Transverse colon (tissue), 4 donors: ENCODE measurements at regions of chr1 and their contacts with region 1.

Region 1: DNA sequence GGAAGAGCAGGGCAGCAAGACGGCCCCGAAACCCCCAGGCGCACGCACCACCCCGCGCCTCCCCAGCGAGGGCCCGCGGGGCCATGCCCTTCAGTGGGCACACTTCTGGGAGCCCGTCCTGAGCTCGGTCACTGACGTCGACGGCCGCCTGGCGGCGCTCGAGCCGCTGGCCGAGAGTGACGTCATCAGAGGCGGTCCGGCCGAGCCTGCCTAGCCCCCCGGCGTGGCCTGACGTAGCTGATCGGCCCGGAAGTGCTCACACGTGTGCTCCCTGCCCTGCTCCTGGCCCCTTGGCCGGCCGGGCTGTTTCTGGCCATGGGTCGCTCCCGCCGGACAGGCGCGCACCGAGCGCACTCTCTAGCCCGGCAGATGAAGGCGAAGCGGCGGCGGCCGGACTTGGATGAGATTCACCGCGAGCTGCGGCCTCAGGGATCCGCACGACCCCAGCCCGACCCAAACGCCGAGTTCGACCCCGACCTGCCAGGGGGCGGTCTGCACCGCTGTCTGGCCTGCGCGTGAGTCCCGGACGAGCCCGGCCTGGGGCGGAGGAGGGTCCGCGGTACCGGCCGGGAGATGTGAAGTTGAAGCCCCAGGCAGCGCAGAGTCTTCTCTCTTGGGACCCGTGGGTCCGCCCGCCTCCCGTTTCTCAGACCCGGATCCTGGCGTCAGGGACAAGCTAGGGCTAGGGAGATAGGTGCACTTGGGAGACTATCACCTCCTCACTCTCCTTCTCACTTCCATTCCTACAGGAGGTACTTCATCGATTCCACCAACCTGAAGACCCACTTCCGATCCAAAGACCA is at the start of gene ZNF593:
- DNase-seq: peak; percentile 94
- H3K4me3 ChIP-seq: peak within 1 kb of the TSS; percentile 59 to 91 (median 62)
- H3K27ac ChIP-seq: peak within 1 kb of the TSS; percentile 70 to 87 (median 78)
- H3K4me1 ChIP-seq: peaks cover 8 to 19% (median 12%) of the 10 kb centered on the region in 4 donors
- H3K27me3 ChIP-seq: no peaks in the 10 kb centered on the region
- CTCF ChIP-seq: peak; percentile 86 to 99 (median 93)
- EP300 ChIP-seq: no peak
- POLR2A ChIP-seq: peak; percentile 72
- total RNA-seq, gene ZNF593: 18.7 to 27.2 (median 26.9) TPM in 3 of 4 donors, not detected in the other

Region 2: GRCh38 chr1:24186993-24187805 is 1982.7 kb before region 1 on chr1 and contains the start of gene IFNLR1:
- in situ Hi-C with region 1: no loop called
- intact Hi-C with region 1: no loop called
- DNase-seq: peak; percentile 86
- H3K4me3 ChIP-seq: peak within 1 kb of the TSS; percentile 29 to 54 (median 50)
- H3K27ac ChIP-seq: peak within 1 kb of the TSS; percentile 48 to 72 (median 59)
- H3K4me1 ChIP-seq: peaks cover 10 to 20% (median 13%) of the 10 kb centered on the region in 4 donors
- H3K27me3 ChIP-seq: peaks cover 22% of the 10 kb centered on the region
- CTCF ChIP-seq: no peak
- EP300 ChIP-seq: no peak
- POLR2A ChIP-seq: peak; percentile 39
- total RNA-seq, gene IFNLR1: 2.6 to 37.4 (median 12.7) TPM

Region 3: DNA sequence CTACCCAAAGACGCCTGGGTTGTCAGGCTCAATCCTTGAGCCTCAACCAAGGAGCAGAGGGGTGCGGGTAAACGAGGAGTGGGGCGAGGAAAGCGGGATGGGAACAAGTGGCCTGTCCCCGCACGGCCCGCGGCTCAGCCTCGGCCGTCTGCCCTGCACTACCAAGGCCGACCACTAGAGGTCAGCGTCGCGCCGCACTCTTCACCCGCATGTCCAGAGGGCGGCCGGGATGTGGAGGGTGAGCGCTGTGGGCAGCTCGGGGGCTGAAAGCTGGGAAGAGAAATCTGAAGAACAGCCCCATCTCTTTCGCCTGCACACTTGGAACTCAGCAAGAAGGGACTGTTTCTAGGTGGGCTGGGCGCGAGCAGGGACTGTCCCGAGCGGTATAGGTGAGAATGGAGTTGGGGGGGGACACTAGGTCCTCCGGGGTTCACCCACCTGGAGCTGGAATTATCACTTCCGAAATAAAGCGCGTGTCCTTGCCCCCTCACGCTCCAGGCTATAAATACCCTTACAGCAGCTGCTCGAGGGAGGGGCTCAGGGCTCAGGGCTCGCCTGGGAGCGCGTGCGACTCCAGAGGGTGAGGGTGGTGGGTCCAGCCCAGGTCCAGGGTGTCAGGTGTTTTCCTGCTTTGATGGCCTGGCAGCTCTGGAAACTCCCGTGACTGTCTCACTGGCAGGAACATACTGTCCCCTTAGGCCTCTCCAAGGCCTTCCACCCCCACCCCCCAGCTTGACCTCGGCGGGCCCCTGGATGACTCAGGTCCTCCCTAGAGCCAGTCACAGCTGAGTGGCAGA is 133.7 kb before region 1 on chr1:
- in situ Hi-C with region 1: loop called in 2 of 4 experiments (anchors 25 kb)
- intact Hi-C with region 1: no loop called
- DNase-seq: peak; percentile 86
- H3K4me3 ChIP-seq: peak overlapping the region; percentile 47 to 86 (median 58)
- H3K27ac ChIP-seq: peak overlapping the region; percentile 80 to 87 (median 86)
- H3K4me1 ChIP-seq: peaks cover 3 to 15% (median 10%) of the 10 kb centered on the region in 4 donors
- H3K27me3 ChIP-seq: peaks cover 6% of the 10 kb centered on the region
- CTCF ChIP-seq: peak; percentile 99 to 100 (median 100)
- EP300 ChIP-seq: no peak
- POLR2A ChIP-seq: no peak